Activated T-helper 2 cell treated with anti-CD3 and anti-CD28 coated beads, Interferon-gamma antibody, Interleukin-2, Interleukin-4, amounts not matched to agents 10 μg/mL and 5 μg/mL and 100 μg/mL, durations not matched to agents 14 hours and 24 hours and 36 hours (primary cell): ENCODE measurements at regions of chr13 and their contacts with region 1.

Region 1: GRCh38 chr13:41427666-41428065 is 29.7 kb upstream of the RGCC start:
- DNase-seq: no peak
- H3K4me3 Mint-ChIP-seq: no peak overlapping the region
- H3K27ac Mint-ChIP-seq: no peak overlapping the region
- H3K4me1 Mint-ChIP-seq: peaks cover 4% of the 10 kb centered on the region
- H3K27me3 Mint-ChIP-seq: no peaks in the 10 kb centered on the region

Region 2: DNA sequence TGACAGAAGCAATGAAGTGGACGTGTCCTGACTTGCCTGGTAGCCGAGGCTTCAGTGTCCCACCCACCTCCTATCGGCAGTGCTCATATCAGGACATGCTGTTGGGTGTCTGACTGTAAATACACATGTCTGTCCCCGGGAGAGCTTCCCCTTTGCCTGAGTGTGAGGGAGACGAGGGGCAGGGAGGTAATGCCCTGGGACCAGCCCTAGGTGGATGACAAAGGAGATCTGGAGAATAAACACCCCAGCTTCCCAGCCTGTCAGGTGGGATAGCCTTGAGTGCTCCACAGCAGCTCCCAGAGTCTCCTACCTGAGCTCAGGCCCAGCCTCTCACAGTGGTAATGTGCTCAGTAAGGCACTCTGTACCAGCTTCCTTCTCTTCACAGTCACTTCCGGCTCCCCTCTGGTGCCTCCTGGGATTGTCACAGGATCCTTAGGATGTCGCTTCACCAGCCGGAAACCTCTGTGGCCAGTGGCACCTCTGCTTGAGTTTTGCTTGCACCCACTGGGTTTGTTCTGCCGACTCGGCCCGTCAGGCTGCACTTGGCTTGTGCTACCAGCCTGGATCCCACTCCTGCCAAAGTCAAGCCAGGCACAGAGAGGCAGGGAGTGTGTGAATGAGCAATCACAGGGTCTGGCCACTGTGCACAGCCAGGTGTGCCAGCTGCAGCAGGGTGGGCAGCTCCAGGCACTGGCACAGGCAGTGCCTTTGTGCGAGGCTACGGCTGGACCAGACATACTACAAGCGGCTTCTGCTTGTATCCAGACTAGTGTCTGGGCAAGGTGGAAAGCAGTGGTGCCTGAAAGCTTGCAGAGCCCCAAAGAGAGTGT is 24.8 kb before region 1 on chr13:
- intact Hi-C with region 1: loop called (anchors 2 kb)
- DNase-seq: no peak
- H3K4me3 Mint-ChIP-seq: no peak overlapping the region
- H3K27ac Mint-ChIP-seq: no peak overlapping the region
- H3K4me1 Mint-ChIP-seq: no peaks in the 10 kb centered on the region
- H3K27me3 Mint-ChIP-seq: peaks cover 11% of the 10 kb centered on the region